Common myeloid progenitor, CD34-positive (primary cell): ENCODE measurements at regions of chr13 and their contacts with region 1.

Region 1: GRCh38 chr13:27533155-27533643 is 82.8 kb upstream of the MTIF3 start:
- DNase-seq: peak; percentile 44 to 76 (median 67)
- H3K4me3 ChIP-seq: peak overlapping the region in 5 of 7 experiments; percentile 15 to 62 (median 43)
- H3K27ac ChIP-seq: no peak overlapping the region
- H3K4me1 ChIP-seq: peaks cover 0 to 9% (median 8%) of the 10 kb centered on the region in 4 experiments
- H3K27me3 ChIP-seq: peaks cover 0 to 2% (median 0%) of the 10 kb centered on the region in 5 experiments

Region 2: GRCh38 chr13:27427641-27428040 is 105.6 kb before region 1 on chr13:
- CTCF ChIA-PET with region 1: no interaction called
- POLR2A ChIA-PET with region 1: no interaction called
- DNase-seq: no peak
- H3K4me3 ChIP-seq: peak overlapping the region in 4 of 7 experiments; percentile 75 to 93 (median 80)
- H3K27ac ChIP-seq: peak overlapping the region; percentile 26 to 85
- H3K4me1 ChIP-seq: peaks cover 32 to 59% (median 46%) of the 10 kb centered on the region in 4 experiments
- H3K27me3 ChIP-seq: no peaks in the 10 kb centered on the region

Region 3: DNA sequence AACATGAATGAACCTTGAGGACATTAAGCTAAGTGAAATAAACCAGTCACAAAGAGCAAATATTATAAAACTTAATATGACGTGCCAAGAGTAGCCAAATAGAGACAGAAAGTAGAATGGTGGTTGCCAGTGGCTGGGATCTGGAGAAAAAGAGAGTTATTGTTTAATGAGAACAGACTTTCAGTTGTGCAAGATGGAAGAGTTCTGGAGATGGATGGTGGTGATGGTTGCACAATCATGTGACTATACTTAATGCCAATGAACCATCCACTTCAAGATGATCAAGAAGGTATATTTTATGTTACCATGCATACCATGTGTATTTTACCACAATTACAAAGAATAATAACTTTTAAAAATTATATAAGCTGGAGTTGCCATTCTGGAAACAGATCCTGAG is 17.1 kb before region 1 on chr13:
- CTCF ChIA-PET with region 1: interaction called, 12 read pairs
- POLR2A ChIA-PET with region 1: no interaction called
- DNase-seq: no peak
- H3K4me3 ChIP-seq: no peak overlapping the region
- H3K27ac ChIP-seq: no peak overlapping the region
- H3K4me1 ChIP-seq: no peaks in the 10 kb centered on the region
- H3K27me3 ChIP-seq: no peaks in the 10 kb centered on the region

Region 4: GRCh38 chr13:27712421-27712820 is 179.2 kb after region 1 on chr13:
- CTCF ChIA-PET with region 1: interaction called, 12 read pairs
- POLR2A ChIA-PET with region 1: no interaction called
- DNase-seq: peak; percentile 31 to 47 (median 37)
- H3K4me3 ChIP-seq: no peak overlapping the region
- H3K27ac ChIP-seq: no peak overlapping the region
- H3K4me1 ChIP-seq: no peaks in the 10 kb centered on the region
- H3K27me3 ChIP-seq: peaks cover 0 to 12% (median 4%) of the 10 kb centered on the region in 5 experiments